ENCODE measurements at regions of chr6 and their contacts with region 1.

Region 1: GRCh38 chr6:29752451-29753308 is 29.4 kb downstream of the HLA-F start:
- DNase-seq: peak; percentile 89 to 92
- ATAC-seq: peak; percentile 87 to 92 (median 90)
- H3K4me3 ChIP-seq: peak overlapping the region; percentile 80
- H3K27ac ChIP-seq: peak overlapping the region; percentile 79
- H3K4me1 ChIP-seq: peaks cover 5% of the 10 kb centered on the region
- H3K27me3 ChIP-seq: peaks cover 0 to 9% (median 0%) of the 10 kb centered on the region in 3 donors
- CTCF ChIP-seq: peak; percentile 91

Region 2: DNA sequence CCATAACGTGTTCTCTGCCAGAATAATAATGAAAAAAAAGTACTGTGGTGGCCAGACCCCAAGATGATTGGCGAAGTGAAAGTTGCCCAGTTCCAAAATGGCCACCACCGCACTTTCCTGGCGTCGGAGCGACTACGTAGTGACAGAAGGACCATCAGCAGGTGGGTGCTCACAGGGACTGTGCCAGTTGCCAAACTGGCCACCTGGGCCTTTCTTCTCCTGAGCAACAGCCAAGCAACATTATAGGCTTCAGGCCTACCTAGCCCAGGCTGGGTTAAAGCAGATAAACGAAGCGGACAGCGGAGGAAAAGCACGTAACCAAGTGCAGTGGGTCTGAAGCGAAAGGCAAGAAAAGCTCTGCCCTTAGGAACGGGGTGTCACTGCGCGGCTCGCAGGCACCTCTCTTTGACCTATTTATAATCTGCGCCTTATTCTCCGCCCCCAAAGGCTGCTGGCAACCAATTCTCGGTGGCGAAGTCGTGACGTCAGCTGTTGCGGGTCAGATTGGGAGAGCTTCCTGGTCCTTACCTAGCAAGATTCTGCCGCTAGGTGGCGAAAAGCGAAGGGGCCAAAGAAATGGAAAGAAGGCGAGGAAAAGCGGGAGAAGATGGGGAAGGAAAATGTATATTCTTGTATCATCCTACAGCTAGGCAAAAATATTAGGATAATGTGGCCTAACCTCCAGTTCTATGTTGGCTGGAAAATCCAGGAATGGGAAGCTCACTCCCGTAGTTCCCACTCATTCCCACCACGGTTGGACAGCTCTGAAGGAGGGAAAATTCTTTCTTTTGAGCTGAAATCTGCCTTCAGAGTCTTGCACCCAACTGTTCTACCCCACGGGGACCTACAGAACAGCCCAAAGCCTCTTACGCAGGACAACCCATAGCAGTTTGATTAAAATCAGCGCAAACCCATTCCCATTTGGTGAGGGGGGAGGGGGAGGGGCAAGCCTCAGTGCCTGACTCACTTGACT is 102.7 kb before region 1 on chr6:
- intact Hi-C with region 1: loop called in 1 of 2 experiments (anchors 5 kb)
- DNase-seq: peak; percentile 96 to 98
- ATAC-seq: peak; percentile 98 to 99 (median 99)
- H3K4me3 ChIP-seq: peak overlapping the region; percentile 81
- H3K27ac ChIP-seq: peak overlapping the region; percentile 94
- H3K4me1 ChIP-seq: peaks cover 3% of the 10 kb centered on the region
- H3K27me3 ChIP-seq: no peaks in the 10 kb centered on the region
- CTCF ChIP-seq: peak; percentile 93

Region 3: GRCh38 chr6:29827579-29828470 is 75.1 kb after region 1 on chr6 and contains the start of gene HLA-G:
- intact Hi-C with region 1: no loop called
- DNase-seq: no peak
- ATAC-seq: no peak
- H3K4me3 ChIP-seq: peak within 1 kb of the TSS; percentile 46
- H3K27ac ChIP-seq: no peak within 1 kb of the TSS
- H3K4me1 ChIP-seq: no peaks in the 10 kb centered on the region
- H3K27me3 ChIP-seq: peaks cover 2 to 68% (median 19%) of the 10 kb centered on the region in 3 donors
- CTCF ChIP-seq: no peak
- total RNA-seq, gene HLA-G: 0.15 to 0.42 TPM in 2 of 4 donors, not detected in the others

Region 4: DNA sequence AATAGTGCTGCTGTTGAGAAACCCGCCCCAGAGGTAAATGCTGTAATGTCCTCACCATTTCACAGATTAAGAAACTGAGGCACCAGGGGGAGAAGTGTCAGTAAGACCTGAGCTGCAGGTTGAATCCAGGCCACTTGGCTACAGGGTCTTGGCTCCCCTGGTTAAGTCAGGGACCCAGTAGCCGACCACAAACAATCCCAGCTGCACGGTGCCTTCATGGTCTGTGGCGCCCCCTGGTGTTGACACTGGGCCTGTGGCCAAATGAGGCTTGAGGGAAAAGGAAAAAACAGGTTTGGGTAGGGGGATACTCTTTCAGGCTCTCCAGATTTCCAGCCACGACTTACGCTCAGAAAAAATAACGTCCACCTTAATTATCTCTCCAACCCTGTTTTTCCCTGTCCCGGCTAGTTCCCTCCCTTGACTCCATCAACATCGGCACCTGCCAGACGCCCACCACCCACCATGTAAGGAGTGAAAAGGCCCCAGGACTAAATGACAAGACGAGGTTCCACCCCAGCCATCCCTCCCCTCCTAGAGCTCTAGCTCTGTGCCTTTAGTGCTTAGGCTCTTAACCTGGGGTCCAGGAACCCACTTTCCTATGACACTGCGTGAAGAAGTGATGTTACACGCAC is 260.7 kb after region 1 on chr6:
- intact Hi-C with region 1: loop called in 1 of 2 experiments (anchors 10 kb)
- DNase-seq: no peak
- ATAC-seq: peak; percentile 57 to 83 (median 64)
- H3K4me3 ChIP-seq: no peak overlapping the region
- H3K27ac ChIP-seq: no peak overlapping the region
- H3K4me1 ChIP-seq: no peaks in the 10 kb centered on the region
- H3K27me3 ChIP-seq: peaks cover 2 to 12% (median 5%) of the 10 kb centered on the region in 3 donors
- CTCF ChIP-seq: peak; percentile 89

Region 5: DNA sequence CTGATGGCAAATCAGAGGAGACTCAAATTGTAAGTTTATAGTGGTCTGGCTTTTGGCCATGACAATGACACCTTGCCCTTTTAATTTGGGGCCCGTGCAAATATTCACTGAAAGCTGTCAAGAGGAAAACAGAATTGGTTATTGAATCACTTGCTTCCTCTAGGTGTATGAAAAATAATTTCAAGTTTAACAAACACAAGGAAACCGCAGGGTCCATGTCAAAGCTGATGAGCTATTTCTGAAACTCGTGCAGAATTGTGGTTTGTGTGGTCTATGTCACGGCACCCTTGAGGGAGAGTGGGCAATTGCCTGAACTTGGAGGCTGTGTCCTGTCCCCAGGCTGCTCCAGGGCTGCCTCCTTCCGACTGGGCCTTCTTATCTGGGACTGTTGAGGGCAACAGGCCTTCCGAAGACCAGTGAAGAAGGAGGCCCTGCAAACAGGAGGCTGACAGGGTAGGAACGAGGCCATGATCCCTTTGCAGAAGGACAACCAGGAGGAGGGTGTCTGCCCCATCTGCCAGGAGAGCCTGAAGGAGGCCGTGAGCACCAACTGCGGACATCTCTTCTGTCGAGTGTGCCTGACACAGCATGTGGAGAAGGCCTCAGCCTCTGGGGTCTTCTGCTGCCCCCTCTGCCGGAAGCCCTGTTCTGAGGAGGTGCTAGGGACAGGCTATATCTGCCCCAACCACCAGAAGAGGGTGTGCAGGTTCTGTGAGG is 384.0 kb after region 1 on chr6:
- intact Hi-C with region 1: no loop called
- DNase-seq: no peak
- ATAC-seq: no peak
- H3K4me3 ChIP-seq: no peak overlapping the region
- H3K27ac ChIP-seq: no peak overlapping the region
- H3K4me1 ChIP-seq: no peaks in the 10 kb centered on the region
- H3K27me3 ChIP-seq: peaks cover 0 to 34% (median 4%) of the 10 kb centered on the region in 3 donors
- CTCF ChIP-seq: no peak

Measured in psoas muscle (tissue), 8 donors.